T-cell (primary cell): ENCODE measurements at regions of chr3 and their contacts with region 1.

Region 1: DNA sequence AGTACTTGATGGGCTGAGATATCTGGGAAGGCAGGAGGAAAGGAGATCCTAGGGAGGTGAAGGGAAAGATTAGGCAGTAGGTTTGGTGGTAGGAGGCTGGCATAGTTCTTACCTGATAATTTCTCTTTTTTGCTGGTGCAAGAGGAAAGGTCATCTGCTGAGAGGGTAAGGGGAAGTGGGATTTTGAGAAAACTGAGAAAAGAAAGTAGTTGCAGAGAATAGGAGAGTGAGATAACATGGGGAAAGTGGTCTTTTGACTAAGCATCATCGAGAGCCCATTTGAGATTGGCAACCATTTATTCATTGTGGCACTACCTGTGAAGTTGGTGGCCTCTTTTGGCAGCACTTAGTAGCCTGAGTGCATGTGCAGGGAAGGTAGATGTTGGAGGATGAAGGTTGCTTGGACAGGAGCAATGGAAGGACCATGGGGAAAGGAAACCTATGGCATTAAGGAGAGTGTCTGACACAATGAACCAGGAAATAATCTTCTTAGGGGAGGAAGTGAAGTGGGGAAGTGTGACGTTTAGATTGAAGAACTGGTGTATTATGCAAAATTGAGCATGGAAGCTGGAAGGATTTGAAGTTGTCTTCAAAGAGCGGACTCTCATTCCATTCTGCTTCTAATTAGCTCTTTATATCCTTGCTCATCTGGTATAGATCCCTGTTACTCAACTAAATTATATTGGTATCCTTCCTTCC is 21.9 kb upstream of the USP13 start:
- DNase-seq: no peak
- ATAC-seq: no peak
- H3K4me3 ChIP-seq: no peak overlapping the region
- H3K4me3 Mint-ChIP-seq: no peak overlapping the region
- H3K27ac ChIP-seq: no peak overlapping the region
- H3K27ac Mint-ChIP-seq: no peak overlapping the region
- H3K4me1 ChIP-seq: no peaks in the 10 kb centered on the region
- H3K4me1 Mint-ChIP-seq: no peaks in the 10 kb centered on the region
- H3K27me3 ChIP-seq: no peaks in the 10 kb centered on the region
- H3K27me3 Mint-ChIP-seq: no peaks in the 10 kb centered on the region

Region 2: DNA sequence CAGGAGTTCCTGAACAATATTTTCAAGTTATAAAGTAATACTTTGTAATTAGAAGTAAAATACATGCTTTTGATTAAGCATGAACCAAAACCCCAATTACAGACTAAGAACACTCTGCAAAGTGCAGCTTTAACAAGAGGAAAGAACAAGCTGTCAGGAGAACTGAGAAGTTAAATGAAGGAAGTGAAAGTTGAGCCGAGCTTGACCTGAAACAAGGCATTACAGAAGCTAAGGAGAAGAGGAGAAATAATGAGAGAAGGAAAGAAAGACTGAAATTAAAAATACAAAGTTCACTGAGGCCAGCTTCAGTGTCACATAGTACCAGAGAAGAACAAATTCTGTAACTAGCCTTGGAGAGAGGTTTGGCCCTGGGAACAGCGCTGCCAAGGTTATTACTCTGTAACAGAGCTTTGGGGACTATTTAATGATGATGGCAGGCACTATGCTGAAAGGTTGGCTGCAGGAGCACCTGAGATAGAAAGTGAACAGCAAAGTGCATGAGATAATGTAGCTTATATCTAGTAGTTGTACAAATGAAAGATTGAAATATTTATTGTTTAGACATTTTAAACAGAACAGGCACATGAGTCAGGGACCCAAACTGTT is 647.8 kb after region 1 on chr3:
- CTCF ChIA-PET with region 1: no interaction called
- POLR2A ChIA-PET with region 1: no interaction called
- DNase-seq: no peak
- ATAC-seq: no peak
- H3K4me3 ChIP-seq: no peak overlapping the region
- H3K4me3 Mint-ChIP-seq: no peak overlapping the region
- H3K27ac ChIP-seq: no peak overlapping the region
- H3K27ac Mint-ChIP-seq: no peak overlapping the region
- H3K4me1 ChIP-seq: no peaks in the 10 kb centered on the region
- H3K4me1 Mint-ChIP-seq: no peaks in the 10 kb centered on the region
- H3K27me3 ChIP-seq: no peaks in the 10 kb centered on the region
- H3K27me3 Mint-ChIP-seq: peaks cover 0 to 4% of the 10 kb centered on the region in 2 donors

Region 3: GRCh38 chr3:180930526-180930925 is 1299.6 kb after region 1 on chr3:
- CTCF ChIA-PET with region 1: no interaction called
- POLR2A ChIA-PET with region 1: interaction called in 1 of 2 experiments, 12 read pairs
- DNase-seq: no peak
- ATAC-seq: no peak
- H3K4me3 ChIP-seq: no peak overlapping the region
- H3K4me3 Mint-ChIP-seq: peak overlapping the region in 1 of 3 donors; percentile 38
- H3K27ac ChIP-seq: no peak overlapping the region
- H3K27ac Mint-ChIP-seq: peak overlapping the region in 1 of 2 donors; percentile 15
- H3K4me1 ChIP-seq: peaks cover 0 to 20% of the 10 kb centered on the region in 2 experiments
- H3K4me1 Mint-ChIP-seq: peaks cover 69 to 76% (median 75%) of the 10 kb centered on the region in 3 donors
- H3K27me3 ChIP-seq: no peaks in the 10 kb centered on the region
- H3K27me3 Mint-ChIP-seq: no peaks in the 10 kb centered on the region